Endothelial cell of umbilical vein (primary cell): ENCODE measurements at regions of chr5 and their contacts with region 1.

Region 1: GRCh38 chr5:7856855-7857254 is 5.9 kb upstream of the CFAP90 start:
- DNase-seq: peak; percentile 13
- H3K4me3 ChIP-seq: no peak overlapping the region
- H3K27ac ChIP-seq: no peak overlapping the region
- H3K4me1 ChIP-seq: no peaks in the 10 kb centered on the region
- H3K27me3 ChIP-seq: peaks cover 0 to under 1% of the 10 kb centered on the region in 2 experiments
- CTCF ChIP-seq: peak; percentile 37 to 47
- POLR2A ChIP-seq: no peak

Region 2: DNA sequence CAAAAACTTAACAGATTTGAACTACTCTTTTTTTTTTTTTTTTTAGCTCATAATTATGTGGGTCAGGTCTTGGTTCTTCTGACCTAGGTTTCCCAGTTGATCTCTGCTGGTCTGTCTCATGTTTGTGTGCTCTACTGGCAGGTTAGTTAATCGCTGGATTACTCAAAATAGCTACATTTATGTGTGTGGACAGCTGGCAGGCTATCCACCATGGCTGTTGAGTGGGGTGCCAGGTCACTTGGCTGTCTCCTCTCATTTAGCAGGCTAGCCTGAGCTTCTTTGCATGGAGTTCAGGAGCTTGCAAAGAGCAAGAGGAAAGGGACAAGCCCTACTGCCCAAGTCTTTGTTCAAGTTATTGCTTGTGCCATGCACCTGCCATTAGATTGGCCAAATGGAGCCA is 451.6 kb before region 1 on chr5:
- CTCF ChIA-PET with region 1: no interaction called
- POLR2A ChIA-PET with region 1: no interaction called
- dilution Hi-C with region 1: no loop called
- intact Hi-C with region 1: no loop called
- DNase-seq: no peak
- H3K4me3 ChIP-seq: no peak overlapping the region
- H3K27ac ChIP-seq: no peak overlapping the region
- H3K4me1 ChIP-seq: no peaks in the 10 kb centered on the region
- H3K27me3 ChIP-seq: no peaks in the 10 kb centered on the region
- CTCF ChIP-seq: no peak
- POLR2A ChIP-seq: no peak

Region 3: DNA sequence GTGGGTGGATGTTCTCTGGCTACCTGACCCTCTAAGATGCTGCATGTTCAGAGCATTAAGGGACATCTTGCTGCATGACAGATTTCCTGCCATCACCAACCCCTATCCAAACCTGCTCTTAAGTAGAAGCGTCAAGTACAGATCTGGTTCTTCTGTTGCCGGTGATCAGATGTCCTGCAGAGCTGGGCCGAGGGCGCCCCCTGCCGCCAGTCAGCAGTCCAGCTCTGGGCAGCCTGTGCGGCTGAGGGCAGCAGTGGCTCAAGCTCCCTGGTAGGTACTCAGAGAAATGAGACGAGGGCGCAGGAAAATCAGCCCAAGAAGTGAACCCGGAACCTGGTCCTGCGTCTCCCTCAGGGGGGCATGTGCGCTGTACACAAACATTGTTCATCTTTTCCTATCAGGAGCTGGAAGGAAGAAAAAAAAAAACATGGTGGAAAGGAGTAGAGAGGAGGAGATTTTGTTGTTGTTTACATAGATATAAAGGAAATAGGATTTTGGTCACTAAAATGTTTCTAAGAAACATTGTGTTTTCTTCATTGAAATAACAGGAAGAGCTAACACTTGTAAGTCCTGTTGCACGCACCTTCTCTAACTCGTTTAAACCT is 101.8 kb before region 1 on chr5:
- CTCF ChIA-PET with region 1: no interaction called
- POLR2A ChIA-PET with region 1: no interaction called
- dilution Hi-C with region 1: no loop called
- intact Hi-C with region 1: loop called (anchors 5 kb)
- DNase-seq: peak; percentile 25
- H3K4me3 ChIP-seq: no peak overlapping the region
- H3K27ac ChIP-seq: no peak overlapping the region
- H3K4me1 ChIP-seq: no peaks in the 10 kb centered on the region
- H3K27me3 ChIP-seq: no peaks in the 10 kb centered on the region
- CTCF ChIP-seq: peak; percentile 70 to 80
- POLR2A ChIP-seq: no peak

Region 4: DNA sequence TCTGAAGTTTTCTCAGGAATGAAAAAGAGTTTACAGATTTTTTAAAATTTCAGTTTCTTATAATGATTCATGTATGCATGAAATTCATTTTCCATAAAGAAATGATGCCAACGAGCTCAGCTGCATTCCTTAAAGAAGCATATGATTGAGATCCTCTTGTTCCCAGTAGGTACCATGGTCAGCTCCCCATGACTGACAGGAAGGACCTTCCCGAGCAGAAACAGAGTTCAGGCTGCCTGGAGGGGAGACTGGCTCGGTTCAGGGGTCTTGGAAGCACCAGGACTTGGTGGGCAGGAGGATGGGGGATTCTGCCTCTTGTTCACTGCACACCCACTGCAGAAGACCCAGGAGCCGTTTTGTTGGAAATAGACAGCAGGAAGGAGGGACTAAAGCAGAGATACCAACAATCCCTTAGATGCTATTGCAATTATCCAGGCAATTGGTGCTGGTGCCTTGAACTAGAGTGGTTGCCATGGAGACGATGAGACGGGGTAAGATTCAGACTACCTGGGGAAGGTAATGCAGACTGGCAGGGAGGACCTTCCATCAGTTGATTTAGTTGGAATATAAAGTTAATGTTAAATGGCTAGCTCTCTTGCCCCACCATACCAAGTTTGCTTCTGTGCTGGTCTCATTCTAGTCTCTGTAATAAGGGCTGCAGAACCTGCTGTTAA is 459.9 kb after region 1 on chr5:
- CTCF ChIA-PET with region 1: no interaction called
- POLR2A ChIA-PET with region 1: no interaction called
- dilution Hi-C with region 1: no loop called
- intact Hi-C with region 1: no loop called
- DNase-seq: no peak
- H3K4me3 ChIP-seq: no peak overlapping the region
- H3K27ac ChIP-seq: no peak overlapping the region
- H3K4me1 ChIP-seq: no peaks in the 10 kb centered on the region
- H3K27me3 ChIP-seq: no peaks in the 10 kb centered on the region
- CTCF ChIP-seq: no peak
- POLR2A ChIP-seq: no peak